ENCODE measurements at regions of chr4 and their contacts with region 1.

Region 1: DNA sequence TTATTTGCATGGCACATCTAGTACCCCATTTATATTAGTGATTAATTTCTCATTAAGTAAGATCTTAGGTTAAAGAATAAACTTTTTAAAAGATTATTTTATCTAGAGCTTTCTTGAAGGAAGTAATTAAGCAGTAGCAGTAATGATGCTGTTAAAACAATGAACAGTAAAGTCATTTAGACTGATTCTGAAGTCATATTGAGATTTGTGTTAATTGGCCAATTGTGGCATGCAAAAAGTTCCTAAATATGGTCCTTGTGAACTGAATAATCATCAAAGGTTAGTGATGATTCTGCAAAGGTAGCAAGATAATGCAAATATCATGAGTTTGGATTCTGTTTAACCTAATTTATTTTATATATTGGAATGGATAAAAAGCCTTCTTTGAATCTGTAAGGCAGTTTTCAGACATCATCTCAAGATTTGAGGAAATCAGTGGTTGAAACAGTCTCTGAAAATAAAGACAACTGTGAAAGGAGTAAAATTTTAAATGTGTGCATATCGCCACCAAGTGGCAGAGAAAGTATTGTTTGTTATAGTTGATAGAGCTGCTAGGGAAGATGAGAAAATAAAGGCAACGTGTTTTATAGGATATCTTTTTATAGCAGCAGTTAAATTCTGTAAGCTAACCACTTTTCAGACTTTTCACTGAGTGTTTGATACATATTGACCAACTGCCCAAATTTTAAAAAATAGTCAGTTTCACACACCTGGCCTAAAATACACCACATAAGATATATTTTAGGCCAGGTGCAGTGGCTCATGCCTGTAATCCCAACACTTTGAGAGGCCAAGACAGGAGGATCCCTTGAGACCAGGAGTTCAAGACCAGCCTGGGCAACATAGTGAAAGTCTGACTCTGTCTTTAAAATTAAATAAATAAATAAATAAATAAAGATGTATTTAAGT is 79.6 kb downstream of the CCKAR start:
- DNase-seq: peak in 16 of 35 experiments; percentile 3 to 74 (median 16)
- ATAC-seq: peak in 3 of 4 experiments; percentile 45 to 55 (median 53)
- H3K4me3 ChIP-seq: no peak overlapping the region
- H3K4me3 Mint-ChIP-seq: no peak overlapping the region
- H3K27ac ChIP-seq: no peak overlapping the region
- H3K27ac Mint-ChIP-seq: no peak overlapping the region
- H3K4me1 ChIP-seq: no peaks in the 10 kb centered on the region
- H3K4me1 Mint-ChIP-seq: peaks cover 0 to 6% (median 0%) of the 10 kb centered on the region in 3 donors
- H3K27me3 ChIP-seq: no peaks in the 10 kb centered on the region
- H3K27me3 Mint-ChIP-seq: no peaks in the 10 kb centered on the region

Region 2: GRCh38 chr4:25993395-25994185 is 417.0 kb before region 1 on chr4:
- CTCF ChIA-PET with region 1: interaction called, 9 to 18 read pairs
- POLR2A ChIA-PET with region 1: no interaction called
- DNase-seq: peak in 1 of 35 experiments; percentile 7
- ATAC-seq: no peak
- H3K4me3 ChIP-seq: no peak overlapping the region
- H3K4me3 Mint-ChIP-seq: no peak overlapping the region
- H3K27ac ChIP-seq: no peak overlapping the region
- H3K27ac Mint-ChIP-seq: no peak overlapping the region
- H3K4me1 ChIP-seq: no peaks in the 10 kb centered on the region
- H3K4me1 Mint-ChIP-seq: peaks cover 2 to 3% (median 3%) of the 10 kb centered on the region in 3 donors
- H3K27me3 ChIP-seq: peaks cover 0 to 8% of the 10 kb centered on the region in 2 experiments
- H3K27me3 Mint-ChIP-seq: no peaks in the 10 kb centered on the region

Region 3: DNA sequence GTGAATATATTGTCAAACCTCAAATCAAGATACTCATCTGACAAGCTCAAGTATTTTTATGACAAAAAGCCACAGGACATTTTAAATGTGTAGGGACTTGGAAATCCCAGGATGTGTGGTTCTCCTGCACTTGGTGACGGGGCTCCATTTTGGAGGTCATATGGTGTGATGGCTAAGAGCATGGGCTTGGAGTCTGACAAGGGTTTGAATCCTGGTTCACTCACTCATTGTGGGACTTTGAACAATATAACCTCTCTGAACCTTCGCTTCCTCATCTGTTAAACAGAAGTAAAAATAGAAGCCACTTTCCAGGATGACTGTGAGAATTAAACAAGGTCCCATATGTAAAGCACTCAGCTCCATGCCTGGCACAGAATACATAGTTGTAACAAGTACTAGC is 397.0 kb before region 1 on chr4:
- CTCF ChIA-PET with region 1: interaction called, 3 to 14 read pairs
- POLR2A ChIA-PET with region 1: no interaction called
- DNase-seq: no peak
- ATAC-seq: no peak
- H3K4me3 ChIP-seq: no peak overlapping the region
- H3K4me3 Mint-ChIP-seq: no peak overlapping the region
- H3K27ac ChIP-seq: no peak overlapping the region
- H3K27ac Mint-ChIP-seq: no peak overlapping the region
- H3K4me1 ChIP-seq: no peaks in the 10 kb centered on the region
- H3K4me1 Mint-ChIP-seq: no peaks in the 10 kb centered on the region
- H3K27me3 ChIP-seq: peaks cover 0 to 17% of the 10 kb centered on the region in 2 experiments
- H3K27me3 Mint-ChIP-seq: peaks cover 29 to 39% of the 10 kb centered on the region in 2 donors

Region 4: DNA sequence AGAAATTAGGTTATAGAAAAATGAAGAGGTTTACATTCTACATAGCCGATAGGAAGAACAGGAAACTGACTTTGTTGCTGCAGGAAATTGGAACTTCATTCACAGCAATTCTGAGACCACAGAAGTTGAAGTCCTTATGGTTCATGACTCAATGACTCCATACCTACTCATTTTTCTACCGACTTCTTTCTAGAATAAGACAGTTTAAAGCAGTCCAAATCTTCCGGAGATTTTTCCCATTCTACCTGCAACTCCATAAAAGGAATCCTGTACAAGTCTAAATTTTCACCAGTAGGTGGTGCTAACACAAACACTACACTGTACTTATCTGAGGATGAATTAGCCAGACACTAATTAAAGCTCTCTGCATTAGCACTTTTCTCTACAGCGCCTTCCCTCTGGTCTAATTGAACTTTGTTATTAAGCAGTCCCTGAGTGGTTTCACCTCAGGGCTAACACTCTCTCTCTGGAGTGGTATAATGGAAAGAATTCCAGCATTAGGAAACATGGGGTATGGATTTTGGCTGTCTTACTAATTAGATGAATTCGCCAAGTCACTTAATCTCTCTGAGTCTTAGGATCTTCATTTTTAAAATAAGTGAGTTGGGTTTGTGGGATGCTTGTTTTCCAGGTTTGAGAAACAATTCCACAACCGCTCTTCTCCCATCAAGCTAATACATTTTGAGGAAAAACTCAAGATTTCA is 328.7 kb before region 1 on chr4:
- CTCF ChIA-PET with region 1: interaction called, 3 to 12 read pairs
- POLR2A ChIA-PET with region 1: no interaction called
- DNase-seq: peak in 2 of 35 experiments; percentile 13 to 66
- ATAC-seq: peak; percentile 52 to 71 (median 64)
- H3K4me3 ChIP-seq: no peak overlapping the region
- H3K4me3 Mint-ChIP-seq: no peak overlapping the region
- H3K27ac ChIP-seq: no peak overlapping the region
- H3K27ac Mint-ChIP-seq: no peak overlapping the region
- H3K4me1 ChIP-seq: no peaks in the 10 kb centered on the region
- H3K4me1 Mint-ChIP-seq: peaks cover 6 to 19% (median 13%) of the 10 kb centered on the region in 3 donors
- H3K27me3 ChIP-seq: peaks cover 0 to 5% of the 10 kb centered on the region in 2 experiments
- H3K27me3 Mint-ChIP-seq: peaks cover 0 to 27% of the 10 kb centered on the region in 2 donors

Region 5: GRCh38 chr4:26319467-26319948 is 91.1 kb before region 1 on chr4:
- CTCF ChIA-PET with region 1: no interaction called
- POLR2A ChIA-PET with region 1: no interaction called
- DNase-seq: peak; percentile 89 to 99 (median 94)
- ATAC-seq: peak; percentile 77 to 82 (median 80)
- H3K4me3 ChIP-seq: peak overlapping the region; percentile 86 to 99
- H3K4me3 Mint-ChIP-seq: peak overlapping the region; percentile 91 to 99 (median 99)
- H3K27ac ChIP-seq: peak overlapping the region; percentile 93
- H3K27ac Mint-ChIP-seq: peak overlapping the region; percentile 99 to 100
- H3K4me1 ChIP-seq: peaks cover 17 to 27% of the 10 kb centered on the region in 2 experiments
- H3K4me1 Mint-ChIP-seq: peaks cover 25 to 44% (median 39%) of the 10 kb centered on the region in 3 donors
- H3K27me3 ChIP-seq: no peaks in the 10 kb centered on the region
- H3K27me3 Mint-ChIP-seq: peaks cover 0 to under 1% of the 10 kb centered on the region in 2 donors

Region 6: DNA sequence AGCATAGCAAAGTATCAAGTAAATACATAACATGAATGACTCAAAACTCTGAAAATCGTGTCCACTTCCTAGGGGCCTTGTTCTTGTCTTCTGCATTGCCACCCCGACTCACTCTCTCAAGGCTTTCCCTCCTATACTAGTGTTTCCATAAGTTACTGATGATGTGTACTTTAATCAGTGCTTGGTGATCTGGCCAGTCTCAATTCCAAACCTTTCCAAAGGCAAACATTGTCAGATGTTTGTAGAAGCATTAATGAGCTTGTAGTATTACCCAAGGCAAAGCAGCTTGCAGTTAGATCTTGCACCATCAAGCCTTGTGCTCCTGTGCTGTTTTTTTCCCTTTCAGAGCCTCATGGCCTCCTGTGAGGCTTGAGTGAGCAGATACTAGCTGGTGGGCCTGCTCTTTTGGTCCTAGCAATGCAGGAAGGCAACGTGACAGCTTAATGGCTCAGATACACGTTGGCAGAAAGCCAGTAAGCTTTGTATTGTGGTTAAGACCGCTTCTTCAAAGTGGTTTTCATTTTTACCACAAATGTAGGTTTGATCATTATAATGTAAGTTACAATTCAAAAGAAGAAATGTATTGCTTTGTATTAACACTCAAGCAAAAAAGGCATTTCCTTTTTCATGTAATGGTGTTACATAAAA is 38.0 kb before region 1 on chr4:
- CTCF ChIA-PET with region 1: interaction called, 3 to 10 read pairs
- POLR2A ChIA-PET with region 1: no interaction called
- DNase-seq: peak in 34 of 35 experiments; percentile 5 to 82 (median 32)
- ATAC-seq: peak; percentile 43 to 94 (median 90)
- H3K4me3 ChIP-seq: no peak overlapping the region
- H3K4me3 Mint-ChIP-seq: peak overlapping the region in 2 of 3 donors; percentile 1 to 13
- H3K27ac ChIP-seq: no peak overlapping the region
- H3K27ac Mint-ChIP-seq: peak overlapping the region in 1 of 2 donors; percentile 23
- H3K4me1 ChIP-seq: peaks cover 12 to 14% of the 10 kb centered on the region in 2 experiments
- H3K4me1 Mint-ChIP-seq: peaks cover 48 to 62% (median 50%) of the 10 kb centered on the region in 3 donors
- H3K27me3 ChIP-seq: peaks cover 0 to 9% of the 10 kb centered on the region in 2 experiments
- H3K27me3 Mint-ChIP-seq: peaks cover 0 to 2% of the 10 kb centered on the region in 2 donors